Activated CD8-positive, alpha-beta T cell treated with anti-CD3 and anti-CD28 coated beads, Interleukin-2, amount 10 ng/mL, durations not matched to agents 7 days and 5 days (primary cell): ENCODE measurements at regions of chr14 and their contacts with region 1.

Region 1: GRCh38 chr14:88168498-88169165 is 154.4 kb downstream of the KCNK10 start:
- DNase-seq: peak; percentile 69
- ATAC-seq: peak; percentile 92
- H3K4me3 Mint-ChIP-seq: peak overlapping the region; percentile 13
- H3K27ac Mint-ChIP-seq: no peak overlapping the region
- H3K4me1 Mint-ChIP-seq: peaks cover 36% of the 10 kb centered on the region
- H3K27me3 Mint-ChIP-seq: peaks cover 34% of the 10 kb centered on the region

Region 2: DNA sequence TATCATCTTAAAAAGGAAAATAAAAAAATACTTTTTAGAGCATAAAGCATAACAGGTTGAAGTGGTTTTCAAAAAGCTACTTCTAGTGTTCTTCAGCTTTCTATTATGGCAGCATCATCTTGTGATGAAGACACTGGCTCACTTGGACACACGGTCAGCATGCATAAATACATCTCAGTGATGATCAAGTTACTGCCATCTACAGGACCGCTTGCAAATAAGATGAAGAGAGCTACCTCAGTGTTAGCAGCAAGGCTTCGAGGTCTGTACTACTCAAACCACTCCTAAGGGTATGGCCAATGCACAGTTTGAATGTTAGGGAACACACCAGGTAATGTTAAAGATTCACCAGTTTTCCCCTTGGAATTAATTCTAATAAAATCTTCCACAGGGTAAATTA is 234.4 kb before region 1 on chr14:
- CTCF ChIA-PET with region 1: interaction called, 13 read pairs
- POLR2A ChIA-PET with region 1: no interaction called
- DNase-seq: no peak
- ATAC-seq: no peak
- H3K4me3 Mint-ChIP-seq: no peak overlapping the region
- H3K27ac Mint-ChIP-seq: no peak overlapping the region
- H3K4me1 Mint-ChIP-seq: peaks cover 6% of the 10 kb centered on the region
- H3K27me3 Mint-ChIP-seq: no peaks in the 10 kb centered on the region

Region 3: DNA sequence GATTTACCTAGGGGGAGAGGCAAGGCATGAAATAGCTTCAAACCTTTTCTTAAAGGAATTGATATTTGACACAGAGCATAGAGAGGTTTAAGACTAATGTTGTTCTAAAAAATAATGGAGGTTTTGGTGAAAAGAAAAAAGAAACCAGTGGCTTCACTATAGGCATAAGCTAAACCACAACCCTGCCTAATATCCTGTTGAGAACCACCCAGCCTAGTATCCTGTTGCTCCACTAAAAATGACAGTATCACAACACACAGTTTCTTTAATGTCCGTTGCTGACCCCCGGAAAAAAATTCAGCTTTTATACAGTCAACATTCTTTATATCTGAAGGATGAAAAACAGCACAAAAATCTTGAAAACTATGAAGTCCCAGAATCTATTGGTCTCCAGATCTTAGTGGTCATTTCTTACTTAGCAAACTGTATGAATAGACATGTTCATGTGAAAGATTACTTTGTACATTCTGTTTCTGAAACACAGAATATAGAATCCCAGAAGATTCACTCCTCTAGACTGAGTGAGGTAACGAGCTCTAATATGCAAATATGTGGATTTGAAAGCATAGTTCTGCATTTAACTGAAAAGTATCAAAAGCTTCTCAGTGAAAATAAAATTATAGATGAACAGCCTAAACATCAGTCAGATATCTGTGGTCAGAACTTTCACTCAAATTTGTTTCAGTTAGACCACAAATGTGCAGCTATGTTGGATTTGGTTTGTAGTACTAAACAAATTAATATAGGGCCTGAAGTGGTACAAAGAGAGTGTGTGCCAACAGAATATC is 216.1 kb before region 1 on chr14:
- CTCF ChIA-PET with region 1: interaction called, 71 read pairs
- POLR2A ChIA-PET with region 1: no interaction called
- DNase-seq: peak; percentile 45
- ATAC-seq: peak; percentile 88
- H3K4me3 Mint-ChIP-seq: peak overlapping the region; percentile 75
- H3K27ac Mint-ChIP-seq: peak overlapping the region; percentile 94
- H3K4me1 Mint-ChIP-seq: peaks cover 52% of the 10 kb centered on the region
- H3K27me3 Mint-ChIP-seq: no peaks in the 10 kb centered on the region

Region 4: DNA sequence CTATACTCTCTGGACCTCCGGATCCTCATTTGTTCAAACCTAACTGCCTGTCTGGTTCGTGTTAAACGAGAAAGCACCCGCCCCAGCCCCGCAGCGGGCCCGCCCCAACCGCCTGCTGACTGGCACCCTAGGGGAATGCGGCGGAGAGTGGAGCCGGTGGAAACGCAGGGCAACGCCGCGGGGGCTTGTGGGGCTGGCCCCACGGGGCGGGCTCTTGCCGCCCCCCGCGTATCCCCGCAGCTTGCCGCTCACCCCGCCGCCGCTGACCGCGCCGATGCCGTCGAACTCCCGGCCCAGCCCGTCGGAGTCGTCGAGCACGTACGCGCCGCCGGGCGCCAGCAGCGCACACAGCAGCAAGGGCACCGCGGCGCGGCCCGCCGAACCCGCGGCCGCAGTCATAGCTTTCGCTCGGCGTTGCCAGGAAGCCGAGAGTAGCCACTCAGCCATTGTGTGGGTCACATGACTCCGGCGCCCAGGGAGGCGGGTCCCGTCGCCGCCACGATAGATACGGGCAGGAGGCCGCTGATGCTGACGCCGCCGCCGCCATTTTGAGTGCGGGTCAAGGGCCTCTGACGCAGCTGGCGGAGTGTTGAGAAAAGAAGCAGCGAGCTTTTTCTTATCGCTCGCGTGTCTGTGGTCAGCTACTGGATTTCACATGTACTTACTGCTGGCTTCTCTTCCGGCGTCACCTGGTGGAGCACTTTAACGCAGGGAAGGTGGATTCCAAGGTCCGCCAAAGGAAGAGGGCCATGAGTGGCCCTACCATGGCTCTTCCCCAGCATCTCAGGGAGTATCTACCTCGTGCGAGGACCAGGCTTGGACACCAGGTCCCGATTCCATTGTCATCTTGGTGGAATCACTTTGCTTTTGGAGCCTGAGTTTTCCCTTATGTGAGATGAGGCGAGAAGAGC is 175.7 kb before region 1 on chr14 and contains the start of gene GALC:
- CTCF ChIA-PET with region 1: interaction called, 11 read pairs
- POLR2A ChIA-PET with region 1: no interaction called
- DNase-seq: peak; percentile 98
- ATAC-seq: peak; percentile 93
- H3K4me3 Mint-ChIP-seq: peak within 1 kb of the TSS; percentile 91
- H3K27ac Mint-ChIP-seq: peak within 1 kb of the TSS; percentile 93
- H3K4me1 Mint-ChIP-seq: peaks cover 61% of the 10 kb centered on the region
- H3K27me3 Mint-ChIP-seq: no peaks in the 10 kb centered on the region
- total RNA-seq, gene GALC: 15.6 to 17.0 TPM

Region 5: DNA sequence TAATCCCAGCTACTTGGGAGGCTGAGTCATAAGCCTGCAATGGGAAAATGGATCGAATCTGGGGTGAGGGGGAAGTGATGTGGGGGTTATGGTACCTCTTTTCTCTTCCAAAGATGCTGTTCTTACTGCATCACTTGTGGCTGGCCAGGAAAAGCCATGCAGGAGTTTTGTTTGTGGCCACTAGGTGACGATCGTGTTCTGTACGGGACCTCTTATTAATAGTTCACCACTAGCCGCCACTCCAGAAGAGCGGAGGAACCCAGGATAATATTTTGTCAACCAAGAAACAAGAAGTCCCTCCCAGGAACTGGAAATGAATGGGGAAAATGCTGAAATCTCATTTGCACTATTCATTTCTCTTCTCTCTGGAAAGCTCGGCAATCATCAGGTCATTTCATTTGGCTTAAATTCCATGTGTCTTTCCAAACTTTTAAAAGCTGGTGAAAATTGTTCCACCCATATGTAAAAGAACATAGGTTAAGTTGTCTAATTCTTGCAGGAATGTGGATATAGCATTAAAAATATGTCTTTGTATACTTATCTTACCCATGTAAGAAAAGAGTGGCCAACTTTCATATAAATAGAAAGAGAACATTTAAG is 154.8 kb before region 1 on chr14:
- CTCF ChIA-PET with region 1: interaction called, 15 read pairs
- POLR2A ChIA-PET with region 1: no interaction called
- DNase-seq: peak; percentile 46
- ATAC-seq: no peak
- H3K4me3 Mint-ChIP-seq: no peak overlapping the region
- H3K27ac Mint-ChIP-seq: peak overlapping the region; percentile 4
- H3K4me1 Mint-ChIP-seq: peaks cover 63% of the 10 kb centered on the region
- H3K27me3 Mint-ChIP-seq: no peaks in the 10 kb centered on the region

Region 6: GRCh38 chr14:88143810-88144209 is 24.8 kb before region 1 on chr14:
- CTCF ChIA-PET with region 1: no interaction called
- POLR2A ChIA-PET with region 1: no interaction called
- DNase-seq: no peak
- ATAC-seq: no peak
- H3K4me3 Mint-ChIP-seq: no peak overlapping the region
- H3K27ac Mint-ChIP-seq: no peak overlapping the region
- H3K4me1 Mint-ChIP-seq: no peaks in the 10 kb centered on the region
- H3K27me3 Mint-ChIP-seq: peaks cover 12% of the 10 kb centered on the region

Region 7: DNA sequence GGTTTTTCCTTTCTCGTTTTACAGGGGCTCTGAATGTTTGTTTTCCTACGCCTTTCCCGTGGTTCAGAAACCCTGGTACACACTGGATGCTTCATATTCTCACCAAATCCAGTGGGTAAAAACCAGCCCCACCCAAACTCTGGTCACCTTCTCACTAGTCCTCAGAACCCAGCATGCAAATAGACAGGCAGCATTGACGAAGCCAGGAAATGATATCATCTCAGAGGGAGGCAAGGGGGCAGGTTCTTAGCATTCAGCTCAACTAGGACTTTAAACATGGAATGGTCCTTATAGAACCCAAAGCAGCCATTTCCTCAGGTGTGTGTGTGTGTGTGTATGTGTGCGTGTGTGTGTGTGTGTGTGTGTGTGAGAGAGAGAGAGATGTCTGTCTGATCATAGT is 12.4 kb after region 1 on chr14:
- CTCF ChIA-PET with region 1: interaction called, 12 read pairs
- POLR2A ChIA-PET with region 1: no interaction called
- DNase-seq: peak; percentile 28
- ATAC-seq: peak; percentile 57
- H3K4me3 Mint-ChIP-seq: no peak overlapping the region
- H3K27ac Mint-ChIP-seq: no peak overlapping the region
- H3K4me1 Mint-ChIP-seq: peaks cover 10% of the 10 kb centered on the region
- H3K27me3 Mint-ChIP-seq: peaks cover 3% of the 10 kb centered on the region

Region 8: GRCh38 chr14:88256997-88257950 is 88.6 kb after region 1 on chr14:
- CTCF ChIA-PET with region 1: no interaction called
- POLR2A ChIA-PET with region 1: no interaction called
- DNase-seq: no peak
- ATAC-seq: no peak
- H3K4me3 Mint-ChIP-seq: no peak overlapping the region
- H3K27ac Mint-ChIP-seq: no peak overlapping the region
- H3K4me1 Mint-ChIP-seq: no peaks in the 10 kb centered on the region
- H3K27me3 Mint-ChIP-seq: peaks cover 7% of the 10 kb centered on the region